ENCODE measurements at regions of chr21 and their contacts with region 1.

Region 1: GRCh38 chr21:19700476-19700875 is 1296.9 kb upstream of the TMPRSS15 start:
- DNase-seq: no peak
- H3K4me3 ChIP-seq: no peak overlapping the region
- CTCF ChIP-seq: no peak
- POLR2A ChIP-seq: no peak

Region 2: GRCh38 chr21:18936549-18936948 is 763.9 kb before region 1 on chr21:
- intact Hi-C with region 1: loop called (anchors 5 kb)
- DNase-seq: no peak
- H3K4me3 ChIP-seq: no peak overlapping the region
- CTCF ChIP-seq: no peak
- POLR2A ChIP-seq: no peak